Breast epithelium (tissue), 4 donors: ENCODE measurements at regions of chr6 and their contacts with region 1.

Region 1: GRCh38 chr6:130233330-130233729 is 10.6 kb upstream of the SAMD3 start:
- DNase-seq: no peak
- H3K4me3 ChIP-seq: no peak overlapping the region
- H3K27ac ChIP-seq: no peak overlapping the region
- H3K4me1 ChIP-seq: no peaks in the 10 kb centered on the region
- H3K27me3 ChIP-seq: no peaks in the 10 kb centered on the region
- CTCF ChIP-seq: no peak
- POLR2A ChIP-seq: no peak

Region 2: GRCh38 chr6:130259557-130259956 is 26.2 kb after region 1 on chr6:
- intact Hi-C with region 1: no loop called
- DNase-seq: no peak
- H3K4me3 ChIP-seq: no peak overlapping the region
- H3K27ac ChIP-seq: no peak overlapping the region
- H3K4me1 ChIP-seq: no peaks in the 10 kb centered on the region
- H3K27me3 ChIP-seq: no peaks in the 10 kb centered on the region
- CTCF ChIP-seq: no peak
- POLR2A ChIP-seq: no peak

Region 3: DNA sequence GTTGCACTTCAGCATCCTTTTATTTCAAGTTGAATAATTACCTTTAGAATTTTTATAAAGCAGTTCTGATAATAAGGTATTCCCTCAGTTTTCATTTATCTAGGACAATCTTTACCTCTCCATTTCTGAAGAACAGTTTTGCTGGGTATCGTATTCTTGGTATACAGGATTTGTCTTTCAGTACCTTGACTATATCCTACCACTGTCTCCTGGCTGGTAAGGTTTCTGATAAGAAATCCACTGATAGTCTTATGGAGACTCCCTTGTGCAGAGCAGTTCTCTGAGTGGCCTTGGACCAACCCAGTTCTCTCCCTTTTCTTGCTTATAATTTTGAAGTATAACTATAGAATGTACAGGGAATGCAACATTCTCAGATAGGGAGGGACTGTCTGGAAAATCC is 40.7 kb after region 1 on chr6:
- intact Hi-C with region 1: no loop called
- DNase-seq: no peak
- H3K4me3 ChIP-seq: no peak overlapping the region
- H3K27ac ChIP-seq: no peak overlapping the region
- H3K4me1 ChIP-seq: no peaks in the 10 kb centered on the region
- H3K27me3 ChIP-seq: no peaks in the 10 kb centered on the region
- CTCF ChIP-seq: no peak
- POLR2A ChIP-seq: no peak

Region 4: GRCh38 chr6:130288065-130288464 is 54.7 kb after region 1 on chr6:
- intact Hi-C with region 1: no loop called
- DNase-seq: no peak
- H3K4me3 ChIP-seq: no peak overlapping the region
- H3K27ac ChIP-seq: no peak overlapping the region
- H3K4me1 ChIP-seq: no peaks in the 10 kb centered on the region
- H3K27me3 ChIP-seq: no peaks in the 10 kb centered on the region
- CTCF ChIP-seq: no peak
- POLR2A ChIP-seq: no peak

Region 5: DNA sequence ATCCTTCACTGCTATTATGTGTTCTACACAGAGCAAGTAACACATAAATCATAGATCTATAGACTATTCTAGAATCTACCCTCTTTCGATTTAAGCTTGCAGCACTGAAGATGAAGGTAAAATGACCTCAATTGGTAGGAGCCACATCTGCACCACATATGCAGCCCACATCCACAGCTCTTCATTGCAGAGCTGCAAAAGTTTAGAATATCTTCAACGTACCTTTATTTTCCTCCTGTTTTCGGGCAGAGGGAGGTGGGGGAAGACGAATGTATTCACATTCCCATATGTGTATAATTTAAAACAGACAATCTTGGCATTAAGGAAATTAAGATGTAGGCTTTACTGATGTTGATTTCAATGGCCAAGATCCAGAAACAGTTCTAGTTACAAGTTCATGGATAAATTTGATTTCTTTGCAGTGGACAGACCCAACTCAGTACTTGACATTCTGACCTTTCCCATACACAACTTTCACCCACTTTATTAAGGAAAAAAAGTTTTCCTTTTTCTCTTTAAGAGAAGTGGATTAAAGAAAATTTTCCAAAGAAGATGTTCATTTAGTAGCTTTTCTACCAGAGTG is 815.7 kb after region 1 on chr6:
- intact Hi-C with region 1: loop called (anchors 5 kb)
- DNase-seq: no peak
- H3K4me3 ChIP-seq: no peak overlapping the region
- H3K27ac ChIP-seq: no peak overlapping the region
- H3K4me1 ChIP-seq: no peaks in the 10 kb centered on the region
- H3K27me3 ChIP-seq: no peaks in the 10 kb centered on the region
- CTCF ChIP-seq: no peak
- POLR2A ChIP-seq: no peak